ENCODE measurements at regions of chr12 and their contacts with region 1.

Region 1: GRCh38 chr12:28550757-28551704 is 360.8 kb downstream of the CCDC91 start:
- DNase-seq: no peak
- ATAC-seq: peak; percentile 80 to 95 (median 90)
- H3K4me3 ChIP-seq: no peak overlapping the region
- H3K27ac ChIP-seq: no peak overlapping the region
- H3K4me1 ChIP-seq: no peaks in the 10 kb centered on the region
- H3K27me3 ChIP-seq: no peaks in the 10 kb centered on the region
- CTCF ChIP-seq: no peak

Region 2: GRCh38 chr12:28189784-28190320 is 361.2 kb before region 1 on chr12:
- intact Hi-C with region 1: loop called in 1 of 2 experiments (anchors 10 kb)
- DNase-seq: no peak
- ATAC-seq: no peak
- H3K4me3 ChIP-seq: peak overlapping the region; percentile 93
- H3K27ac ChIP-seq: peak overlapping the region; percentile 95
- H3K4me1 ChIP-seq: peaks cover 8% of the 10 kb centered on the region
- H3K27me3 ChIP-seq: no peaks in the 10 kb centered on the region
- CTCF ChIP-seq: no peak

Measured in psoas muscle (tissue), 8 donors.